GM12878 (cell line): ENCODE measurements at regions of chr4 and their contacts with region 1.

Region 1: GRCh38 chr4:72701987-72702819 is 133.2 kb upstream of the ADAMTS3 start:
- DNase-seq: no peak
- ATAC-seq: peak; percentile 81
- H3K4me3 ChIP-seq: peak overlapping the region; percentile 22; the same call in 1 of the 2 replicates
- H3K27ac ChIP-seq: no peak overlapping the region
- H3K4me1 ChIP-seq: no peaks in the 10 kb centered on the region
- H3K27me3 ChIP-seq: no peaks in the 10 kb centered on the region
- CTCF ChIP-seq: peak; percentile 51 to 73 (median 67); a peak in 5 of 6 replicates
- EP300 ChIP-seq: no peak
- POLR2A ChIP-seq: no peak
- RAD21 ChIP-seq: peak; percentile 78

Region 2: GRCh38 chr4:73275318-73275654 is 573.1 kb after region 1 on chr4:
- CTCF ChIA-PET with region 1: no interaction called
- POLR2A ChIA-PET with region 1: no interaction called
- RAD21 ChIA-PET with region 1: no interaction called
- SMC1A ChIA-PET with region 1: no interaction called
- in situ Hi-C with region 1: loop called (anchors 25 kb)
- intact Hi-C with region 1: no loop called
- DNase-seq: no peak
- ATAC-seq: no peak
- H3K4me3 ChIP-seq: no peak overlapping the region
- H3K27ac ChIP-seq: no peak overlapping the region
- H3K4me1 ChIP-seq: no peaks in the 10 kb centered on the region
- H3K27me3 ChIP-seq: no peaks in the 10 kb centered on the region
- CTCF ChIP-seq: no peak
- EP300 ChIP-seq: no peak
- POLR2A ChIP-seq: no peak
- RAD21 ChIP-seq: no peak